Activated T-helper 2 cell treated with anti-CD3 and anti-CD28 coated beads, Interferon-gamma antibody, Interleukin-2, Interleukin-4, amounts not matched to agents 10 μg/mL and 5 μg/mL and 100 μg/mL, durations not matched to agents 14 hours and 24 hours and 36 hours (primary cell): ENCODE measurements at regions of chr5 and their contacts with region 1.

Region 1: GRCh38 chr5:118987988-118988865 is at the start of gene DTWD2:
- DNase-seq: peak; percentile 90
- H3K4me3 Mint-ChIP-seq: peak within 1 kb of the TSS; percentile 77
- H3K27ac Mint-ChIP-seq: peak within 1 kb of the TSS; percentile 34
- H3K4me1 Mint-ChIP-seq: peaks cover 19% of the 10 kb centered on the region
- H3K27me3 Mint-ChIP-seq: no peaks in the 10 kb centered on the region
- total RNA-seq, gene DTWD2: 2.3 and 2.9 TPM in 2 replicates

Region 2: DNA sequence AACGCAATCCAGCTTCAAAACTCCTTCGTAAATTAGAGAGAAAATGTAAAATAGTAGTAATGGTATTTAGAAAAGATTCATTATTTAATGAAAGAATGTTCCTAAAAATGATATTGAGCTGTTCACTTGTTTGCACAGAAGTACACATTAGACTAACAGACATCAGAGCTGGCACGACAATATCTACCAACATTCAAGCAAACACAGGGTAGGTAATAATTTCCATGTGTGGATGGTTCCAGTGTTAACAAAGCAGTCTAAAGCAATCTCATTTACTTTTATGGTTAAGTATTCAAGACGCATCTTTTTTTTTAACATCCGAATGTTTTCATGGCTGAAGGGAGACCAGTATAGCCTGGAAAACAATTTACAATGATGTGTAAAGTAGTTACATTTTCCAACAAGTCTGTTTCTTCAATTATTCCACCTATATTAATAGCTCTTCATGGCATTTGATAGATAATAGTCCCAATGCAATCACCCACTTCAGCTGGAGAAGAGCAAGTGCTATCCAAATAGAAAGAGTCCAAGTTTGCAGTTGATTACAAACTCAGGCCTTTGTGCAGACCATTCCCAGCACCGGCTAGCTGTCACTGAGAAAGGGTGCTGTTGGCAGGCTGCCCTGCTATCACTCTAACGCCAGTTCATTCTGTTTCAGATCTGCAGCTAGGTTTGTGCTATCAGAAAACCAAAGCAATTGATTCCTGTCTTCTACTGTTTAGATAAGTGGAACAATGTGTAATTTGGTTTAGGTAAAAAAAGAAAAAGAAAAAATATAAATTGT is 458.7 kb before region 1 on chr5:
- intact Hi-C with region 1: no loop called
- DNase-seq: no peak
- H3K4me3 Mint-ChIP-seq: no peak overlapping the region
- H3K27ac Mint-ChIP-seq: no peak overlapping the region
- H3K4me1 Mint-ChIP-seq: no peaks in the 10 kb centered on the region
- H3K27me3 Mint-ChIP-seq: no peaks in the 10 kb centered on the region

Region 3: DNA sequence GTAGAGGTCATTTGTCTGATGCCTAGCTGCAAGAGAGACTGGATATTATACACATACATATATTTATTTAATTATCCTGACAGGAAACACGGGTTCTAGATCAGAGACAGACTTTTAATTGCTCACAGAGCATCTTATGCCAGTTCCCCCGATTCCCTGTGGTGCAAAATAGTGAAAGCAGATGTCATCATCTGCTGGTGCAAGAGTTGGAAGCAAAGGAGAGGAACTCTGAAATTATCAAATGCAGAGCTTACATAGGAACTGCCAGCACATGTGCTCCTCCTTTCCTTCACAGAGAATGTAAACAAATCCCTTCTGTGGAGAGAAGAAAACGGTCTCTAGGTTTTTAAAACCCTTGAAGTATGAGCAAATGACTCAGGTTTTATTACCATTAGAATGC is 69.2 kb before region 1 on chr5:
- intact Hi-C with region 1: no loop called
- DNase-seq: no peak
- H3K4me3 Mint-ChIP-seq: no peak overlapping the region
- H3K27ac Mint-ChIP-seq: no peak overlapping the region
- H3K4me1 Mint-ChIP-seq: no peaks in the 10 kb centered on the region
- H3K27me3 Mint-ChIP-seq: no peaks in the 10 kb centered on the region

Region 4: DNA sequence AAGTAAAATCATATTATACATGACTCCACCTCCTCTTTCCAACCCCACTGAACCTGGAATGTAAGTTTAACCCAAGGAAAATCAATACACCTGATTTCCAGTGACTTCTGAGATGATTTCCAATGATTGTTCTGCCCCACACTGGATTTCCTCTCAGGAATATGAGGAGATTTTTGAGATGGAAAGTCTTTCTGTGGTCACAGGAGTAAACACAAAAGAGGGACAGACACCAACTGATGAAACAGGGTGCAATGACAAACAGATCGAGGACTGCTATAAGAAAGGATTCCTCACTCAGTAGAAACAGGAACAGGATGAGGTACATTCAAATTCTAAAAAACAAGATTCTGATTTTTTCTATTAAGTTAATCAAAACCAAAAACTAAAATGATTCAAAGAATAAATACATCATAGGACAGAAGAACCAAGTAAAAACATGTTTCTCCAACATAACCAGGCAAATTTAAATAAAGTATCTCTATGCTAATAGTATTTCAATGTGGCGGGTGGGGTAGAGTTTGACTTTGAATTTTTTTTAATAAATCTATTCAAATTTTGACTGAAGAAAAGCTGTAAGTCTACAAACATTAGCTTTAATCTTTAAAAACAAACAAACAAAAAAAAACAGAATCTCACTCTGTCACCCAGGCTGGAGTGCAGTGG is 42.0 kb before region 1 on chr5:
- intact Hi-C with region 1: no loop called
- DNase-seq: no peak
- H3K4me3 Mint-ChIP-seq: no peak overlapping the region
- H3K27ac Mint-ChIP-seq: no peak overlapping the region
- H3K4me1 Mint-ChIP-seq: no peaks in the 10 kb centered on the region
- H3K27me3 Mint-ChIP-seq: no peaks in the 10 kb centered on the region

Region 5: DNA sequence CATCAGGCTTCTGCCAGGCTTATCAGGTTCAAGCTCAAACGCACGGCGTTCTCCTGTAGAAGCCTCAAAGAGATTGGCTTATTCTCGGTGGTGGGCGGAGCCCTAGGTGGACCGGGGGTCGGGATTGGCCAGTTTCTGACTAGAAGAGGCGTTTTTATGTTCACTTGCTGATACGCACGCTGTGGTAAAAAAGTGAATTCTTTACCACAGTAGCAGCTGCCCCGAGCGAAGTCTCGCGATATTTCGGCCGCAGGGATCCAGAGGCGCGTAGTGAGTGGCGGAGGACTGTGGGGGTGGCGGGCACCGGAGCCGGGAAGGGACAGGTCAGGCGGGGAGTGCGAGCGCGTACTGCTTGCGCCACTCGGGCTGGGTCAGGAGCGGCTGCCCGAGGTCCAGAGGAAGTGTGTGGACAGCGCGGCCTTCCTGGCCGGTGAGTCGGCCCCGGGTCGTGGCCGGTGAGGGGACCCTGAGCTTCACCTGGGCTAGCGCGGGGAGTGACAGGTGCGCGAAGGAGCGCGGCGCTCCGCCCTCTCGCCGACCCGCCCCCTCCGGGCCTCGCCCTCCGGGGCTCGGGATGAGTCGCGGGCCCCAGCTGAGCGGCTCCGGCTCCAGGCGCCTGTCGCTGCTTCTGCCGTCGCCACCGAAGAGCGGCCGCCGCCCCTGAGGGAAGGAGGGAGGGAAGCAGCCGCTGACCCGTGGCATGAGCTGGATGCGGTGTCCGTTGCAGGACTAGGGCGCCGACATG is 82.8 kb after region 1 on chr5 and contains the start of gene DMXL1:
- intact Hi-C with region 1: loop called (anchors 2 kb)
- DNase-seq: peak; percentile 97
- H3K4me3 Mint-ChIP-seq: peak within 1 kb of the TSS; percentile 98
- H3K27ac Mint-ChIP-seq: peak within 1 kb of the TSS; percentile 99
- H3K4me1 Mint-ChIP-seq: peaks cover 33% of the 10 kb centered on the region
- H3K27me3 Mint-ChIP-seq: no peaks in the 10 kb centered on the region
- total RNA-seq, gene DMXL1: 26.7 and 29.3 TPM in 2 replicates

Region 6: DNA sequence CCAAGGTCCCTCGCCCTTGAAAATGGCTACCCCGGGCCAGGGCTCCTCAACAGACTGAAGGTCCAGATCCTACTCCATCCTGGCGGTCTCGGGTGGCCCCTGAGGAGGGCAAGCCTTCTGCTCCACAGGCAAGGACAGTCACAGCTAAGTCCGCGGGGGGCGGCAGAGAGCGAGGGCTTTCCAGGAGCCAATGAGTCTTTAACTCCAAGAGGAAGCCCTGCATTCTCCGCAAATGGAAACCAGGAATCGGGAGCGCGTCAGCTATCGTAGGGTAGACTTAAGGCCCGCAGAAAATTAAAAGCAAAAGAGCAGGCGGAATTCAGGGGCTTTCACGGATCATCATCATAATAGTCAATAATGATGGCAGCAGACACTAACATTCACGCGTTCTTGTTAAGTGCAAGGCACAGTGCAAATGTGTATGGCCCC is 279.7 kb after region 1 on chr5:
- intact Hi-C with region 1: loop called (anchors 1 kb)
- DNase-seq: peak; percentile 70
- H3K4me3 Mint-ChIP-seq: peak overlapping the region; percentile 99
- H3K27ac Mint-ChIP-seq: peak overlapping the region; percentile 95
- H3K4me1 Mint-ChIP-seq: peaks cover 51% of the 10 kb centered on the region
- H3K27me3 Mint-ChIP-seq: no peaks in the 10 kb centered on the region

Region 7: DNA sequence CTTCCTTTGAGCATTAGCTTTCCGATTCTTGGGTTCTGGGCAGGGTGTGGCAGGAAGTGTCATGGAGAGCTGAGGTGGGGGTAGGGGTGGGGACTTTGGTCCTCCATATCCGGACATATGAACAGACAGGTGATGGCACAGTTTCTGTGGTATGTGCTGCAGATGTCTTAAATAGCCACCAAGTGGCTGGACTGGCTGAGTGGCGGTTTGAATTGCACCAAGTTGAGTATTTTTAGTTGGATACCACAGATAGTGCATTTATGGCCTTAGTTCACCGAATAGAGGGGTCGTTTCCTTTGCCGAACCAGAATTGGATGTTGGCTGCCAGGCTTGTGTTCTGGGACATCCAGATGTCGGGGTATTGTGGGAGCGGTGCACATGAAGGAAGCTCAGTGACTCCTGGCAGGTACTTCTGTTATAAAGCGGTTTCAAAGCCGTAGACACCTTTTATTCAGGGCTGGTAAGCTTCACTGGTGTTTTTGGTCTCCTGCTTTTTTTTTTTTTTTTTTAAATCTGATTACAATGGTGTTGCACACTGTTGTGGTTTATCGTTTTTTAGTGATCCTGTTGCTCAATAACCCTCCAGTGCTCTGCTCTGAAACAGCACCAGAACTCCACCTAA is 352.5 kb after region 1 on chr5:
- intact Hi-C with region 1: loop called (anchors 5 kb)
- DNase-seq: peak; percentile 65
- H3K4me3 Mint-ChIP-seq: peak overlapping the region; percentile 78
- H3K27ac Mint-ChIP-seq: peak overlapping the region; percentile 98
- H3K4me1 Mint-ChIP-seq: peaks cover 89% of the 10 kb centered on the region
- H3K27me3 Mint-ChIP-seq: no peaks in the 10 kb centered on the region

Region 8: DNA sequence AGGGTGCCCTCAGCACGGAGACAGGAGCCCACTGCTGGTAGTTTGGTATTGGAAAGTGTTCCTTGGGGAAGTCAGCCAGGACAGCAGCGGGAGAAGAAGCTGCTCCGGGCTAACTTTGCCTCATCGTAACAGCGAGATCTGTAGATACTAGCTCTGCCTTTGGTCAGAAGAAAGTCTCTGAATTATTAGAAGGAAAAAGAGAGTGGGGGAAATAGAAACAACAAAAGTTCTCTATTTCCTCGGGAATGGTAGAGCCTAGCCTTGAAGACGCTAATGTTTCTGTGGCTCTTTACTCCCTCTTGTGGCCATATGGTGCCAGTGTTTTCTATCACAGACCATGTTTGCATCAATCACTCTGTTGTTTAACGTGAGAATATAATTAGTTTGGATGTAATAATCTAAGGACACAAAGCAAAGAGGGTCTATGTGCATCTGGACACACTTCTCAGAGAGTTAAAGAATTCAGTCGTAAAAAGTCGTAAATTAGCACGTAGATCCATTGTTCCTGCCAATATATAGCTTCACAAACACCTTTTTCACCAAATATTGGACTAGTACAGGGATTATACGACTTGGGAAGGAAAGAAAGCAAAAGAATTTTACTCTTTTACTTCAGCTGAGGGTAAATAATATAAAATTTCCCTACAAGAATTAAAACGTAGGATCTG is 423.8 kb after region 1 on chr5:
- intact Hi-C with region 1: loop called (anchors 1 kb)
- DNase-seq: peak; percentile 38
- H3K4me3 Mint-ChIP-seq: peak overlapping the region; percentile 83
- H3K27ac Mint-ChIP-seq: peak overlapping the region; percentile 42
- H3K4me1 Mint-ChIP-seq: peaks cover 36% of the 10 kb centered on the region
- H3K27me3 Mint-ChIP-seq: peaks cover 9% of the 10 kb centered on the region

Region 9: DNA sequence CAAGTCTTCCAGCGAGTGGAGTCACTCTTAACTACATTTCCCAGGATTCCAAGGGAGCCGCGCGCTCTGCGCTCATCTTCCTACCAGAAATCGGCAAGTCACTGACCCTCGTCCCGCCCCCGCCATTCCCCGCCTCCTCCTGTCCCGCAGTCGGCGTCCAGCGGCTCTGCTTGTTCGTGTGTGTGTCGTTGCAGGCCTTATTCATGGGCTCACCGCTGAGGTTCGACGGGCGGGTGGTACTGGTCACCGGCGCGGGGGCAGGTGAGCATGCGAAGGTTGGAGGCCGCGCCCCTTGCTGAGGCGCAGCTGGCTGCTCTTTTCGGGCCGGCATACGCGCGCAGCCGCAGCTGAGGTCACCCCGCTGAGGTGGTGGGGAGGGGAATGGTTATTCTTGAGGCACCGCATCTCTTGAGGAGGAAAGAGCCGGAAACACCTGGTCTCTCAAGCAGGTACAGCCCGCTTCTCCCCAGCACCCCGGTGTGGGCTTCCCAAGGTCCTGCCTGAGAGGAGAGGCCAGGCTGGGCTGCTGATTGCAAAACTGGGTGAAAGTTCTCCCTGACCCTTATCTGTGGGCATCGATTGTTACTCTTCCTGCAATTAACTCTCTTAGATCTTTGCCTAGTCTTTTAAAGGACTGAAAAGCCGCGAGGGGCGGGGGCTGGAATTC is 464.3 kb after region 1 on chr5 and contains the start of gene HSD17B4:
- intact Hi-C with region 1: loop called (anchors 1 kb)
- DNase-seq: peak; percentile 71
- H3K4me3 Mint-ChIP-seq: peak within 1 kb of the TSS; percentile 94
- H3K27ac Mint-ChIP-seq: peak within 1 kb of the TSS; percentile 88
- H3K4me1 Mint-ChIP-seq: peaks cover 17% of the 10 kb centered on the region
- H3K27me3 Mint-ChIP-seq: peaks cover 10% of the 10 kb centered on the region
- total RNA-seq, gene HSD17B4: 81.1 and 88.1 TPM in 2 replicates